ENCODE measurements at regions of chr12 and their contacts with region 1.

Region 1: DNA sequence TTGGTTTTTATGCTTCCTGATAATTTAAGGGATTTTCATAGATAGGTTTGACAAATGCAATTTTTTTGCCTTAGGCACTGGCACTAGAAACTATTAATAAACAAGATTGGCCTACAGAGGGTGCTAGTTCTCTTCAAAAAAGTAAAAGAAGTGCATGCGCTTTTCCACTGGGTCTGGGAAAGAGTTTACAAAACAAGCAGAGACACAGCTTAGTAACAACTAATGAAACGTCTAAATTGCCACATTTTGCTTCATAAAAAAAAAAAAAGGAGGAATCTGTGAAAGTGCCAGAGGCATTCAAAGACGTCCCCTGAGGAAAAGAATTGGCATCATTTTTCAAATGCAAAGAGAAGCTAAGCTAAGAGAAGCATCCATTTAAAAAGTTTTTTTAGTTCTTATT is 58.3 kb upstream of the EEA1 start:
- DNase-seq: peak in 14 of 42 donors; percentile 11 to 75 (median 42)

Region 2: DNA sequence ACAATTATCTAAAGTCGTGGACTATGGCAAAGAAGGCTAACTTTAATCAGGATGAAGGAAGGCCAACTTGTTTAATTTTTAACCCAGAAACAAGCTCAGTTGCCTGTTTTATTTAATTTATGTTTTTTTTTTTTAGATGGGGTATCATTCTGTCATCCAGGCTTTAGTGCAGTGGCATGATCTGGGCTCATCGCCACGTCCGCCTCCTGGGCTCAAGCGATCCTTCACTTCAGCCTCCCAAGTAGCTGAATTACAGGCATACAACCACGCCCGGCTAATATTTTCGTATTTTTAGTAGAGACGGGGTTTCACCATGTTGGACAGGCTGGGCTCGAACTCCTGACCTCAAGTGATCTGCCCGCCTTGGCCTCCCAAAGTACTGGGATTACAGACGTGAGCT is 410.1 kb after region 1 on chr12:
- intact Hi-C with region 1: loop called (anchors 5 kb)
- DNase-seq: no peak